Naive thymus-derived CD4-positive, alpha-beta T cell (primary cell): ENCODE measurements at regions of chr15 and their contacts with region 1.

Region 1: GRCh38 chr15:32659340-32660155 is 18.0 kb downstream of the SCG5 start:
- DNase-seq: no peak
- ATAC-seq: no peak
- H3K4me3 ChIP-seq: no peak overlapping the region
- H3K4me3 Mint-ChIP-seq: no peak overlapping the region
- H3K27ac ChIP-seq: no peak overlapping the region
- H3K27ac Mint-ChIP-seq: no peak overlapping the region
- H3K4me1 ChIP-seq: peaks cover 0 to 6% of the 10 kb centered on the region in 2 donors
- H3K4me1 Mint-ChIP-seq: peaks cover 4 to 24% (median 13%) of the 10 kb centered on the region in 7 donors
- H3K27me3 ChIP-seq: no peaks in the 10 kb centered on the region
- H3K27me3 Mint-ChIP-seq: no peaks in the 10 kb centered on the region

Region 2: DNA sequence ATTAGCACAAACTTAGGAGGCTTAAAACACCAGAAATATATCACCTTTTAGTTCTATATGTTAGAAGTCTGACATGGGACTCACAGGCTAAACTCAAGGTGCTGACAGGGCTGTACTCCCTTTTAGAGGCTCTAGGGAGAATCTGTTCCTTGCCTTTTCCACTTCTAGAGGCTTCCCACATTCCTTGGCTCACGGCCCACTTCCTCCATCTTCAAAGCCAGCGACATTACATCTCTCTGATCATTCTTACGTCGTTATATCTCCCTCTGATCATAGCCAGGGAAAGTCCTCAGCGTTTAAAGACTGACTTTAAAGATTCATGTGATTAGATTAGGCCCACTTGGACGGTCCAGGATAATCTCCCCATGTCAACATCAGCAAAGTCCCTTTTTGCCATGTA is 224.6 kb after region 1 on chr15:
- CTCF ChIA-PET with region 1: no interaction called
- POLR2A ChIA-PET with region 1: no interaction called
- intact Hi-C with region 1: no loop called
- DNase-seq: no peak
- ATAC-seq: no peak
- H3K4me3 ChIP-seq: no peak overlapping the region
- H3K4me3 Mint-ChIP-seq: no peak overlapping the region
- H3K27ac ChIP-seq: no peak overlapping the region
- H3K27ac Mint-ChIP-seq: no peak overlapping the region
- H3K4me1 ChIP-seq: no peaks in the 10 kb centered on the region
- H3K4me1 Mint-ChIP-seq: peaks cover 0 to 5% (median 0%) of the 10 kb centered on the region in 7 donors
- H3K27me3 ChIP-seq: no peaks in the 10 kb centered on the region
- H3K27me3 Mint-ChIP-seq: peaks cover 0 to 7% (median 0%) of the 10 kb centered on the region in 5 donors

Region 3: GRCh38 chr15:32979710-32980109 is 320.2 kb after region 1 on chr15:
- CTCF ChIA-PET with region 1: no interaction called
- POLR2A ChIA-PET with region 1: no interaction called
- intact Hi-C with region 1: no loop called
- DNase-seq: no peak
- ATAC-seq: no peak
- H3K4me3 ChIP-seq: no peak overlapping the region
- H3K4me3 Mint-ChIP-seq: no peak overlapping the region
- H3K27ac ChIP-seq: no peak overlapping the region
- H3K27ac Mint-ChIP-seq: no peak overlapping the region
- H3K4me1 ChIP-seq: no peaks in the 10 kb centered on the region
- H3K4me1 Mint-ChIP-seq: peaks cover 0 to 17% (median 0%) of the 10 kb centered on the region in 7 donors
- H3K27me3 ChIP-seq: no peaks in the 10 kb centered on the region
- H3K27me3 Mint-ChIP-seq: peaks cover 0 to 35% (median 10%) of the 10 kb centered on the region in 5 donors

Region 4: GRCh38 chr15:32994810-32995424 is 335.4 kb after region 1 on chr15:
- CTCF ChIA-PET with region 1: no interaction called
- POLR2A ChIA-PET with region 1: no interaction called
- intact Hi-C with region 1: loop called (anchors 2 to 5 kb)
- DNase-seq: no peak
- ATAC-seq: no peak
- H3K4me3 ChIP-seq: no peak overlapping the region
- H3K4me3 Mint-ChIP-seq: no peak overlapping the region
- H3K27ac ChIP-seq: no peak overlapping the region
- H3K27ac Mint-ChIP-seq: no peak overlapping the region
- H3K4me1 ChIP-seq: no peaks in the 10 kb centered on the region
- H3K4me1 Mint-ChIP-seq: no peaks in the 10 kb centered on the region
- H3K27me3 ChIP-seq: no peaks in the 10 kb centered on the region
- H3K27me3 Mint-ChIP-seq: peaks cover 0 to 22% (median 11%) of the 10 kb centered on the region in 5 donors

Region 5: DNA sequence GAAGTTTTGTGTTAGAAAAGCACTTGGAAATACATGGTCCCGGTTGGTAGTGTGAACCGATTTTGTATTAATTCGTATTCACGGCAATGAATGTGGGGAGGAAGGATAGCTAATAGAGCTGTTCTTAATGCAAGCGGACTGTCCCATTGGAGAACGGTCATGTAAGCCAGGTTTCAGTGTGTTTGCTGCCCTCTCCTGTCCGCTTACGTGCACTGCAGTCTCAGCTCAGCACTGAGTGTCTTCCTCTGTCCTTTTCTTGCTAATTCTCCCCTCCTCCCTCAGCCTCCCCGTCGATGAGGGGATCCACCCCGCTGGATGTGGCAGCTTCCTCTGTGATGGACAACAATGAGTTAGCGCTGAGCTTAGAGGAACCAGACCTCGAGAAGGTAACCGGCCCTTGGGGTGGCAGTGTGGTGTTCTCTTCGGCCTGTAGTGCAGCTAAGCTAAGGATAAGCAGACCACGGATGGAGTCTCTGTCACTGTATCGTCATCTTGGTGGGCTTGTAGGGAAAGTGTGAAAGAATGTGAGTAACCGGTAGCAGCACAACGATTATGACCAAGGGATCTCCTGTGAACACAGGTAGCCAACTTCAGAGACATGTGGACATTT is 1041.3 kb after region 1 on chr15:
- CTCF ChIA-PET with region 1: interaction called, 7 read pairs
- POLR2A ChIA-PET with region 1: no interaction called
- intact Hi-C with region 1: loop called in 1 of 2 experiments (anchors 5 kb)
- DNase-seq: peak in 8 of 9 donors; percentile 16 to 63 (median 48)
- ATAC-seq: peak; percentile 83
- H3K4me3 ChIP-seq: no peak overlapping the region
- H3K4me3 Mint-ChIP-seq: no peak overlapping the region
- H3K27ac ChIP-seq: no peak overlapping the region
- H3K27ac Mint-ChIP-seq: no peak overlapping the region
- H3K4me1 ChIP-seq: no peaks in the 10 kb centered on the region
- H3K4me1 Mint-ChIP-seq: peaks cover 0 to 2% (median 0%) of the 10 kb centered on the region in 7 donors
- H3K27me3 ChIP-seq: no peaks in the 10 kb centered on the region
- H3K27me3 Mint-ChIP-seq: peaks cover 0 to 6% (median 4%) of the 10 kb centered on the region in 5 donors